ENCODE measurements at regions of chr4 and their contacts with region 1.

Region 1: GRCh38 chr4:110970642-110971041 is 347.8 kb upstream of the PITX2 start:
- DNase-seq: peak; percentile 72
- H3K4me3 Mint-ChIP-seq: no peak overlapping the region
- H3K27ac Mint-ChIP-seq: no peak overlapping the region
- H3K4me1 Mint-ChIP-seq: no peaks in the 10 kb centered on the region
- H3K27me3 Mint-ChIP-seq: no peaks in the 10 kb centered on the region
- CTCF ChIP-seq: peak; percentile 44

Region 2: DNA sequence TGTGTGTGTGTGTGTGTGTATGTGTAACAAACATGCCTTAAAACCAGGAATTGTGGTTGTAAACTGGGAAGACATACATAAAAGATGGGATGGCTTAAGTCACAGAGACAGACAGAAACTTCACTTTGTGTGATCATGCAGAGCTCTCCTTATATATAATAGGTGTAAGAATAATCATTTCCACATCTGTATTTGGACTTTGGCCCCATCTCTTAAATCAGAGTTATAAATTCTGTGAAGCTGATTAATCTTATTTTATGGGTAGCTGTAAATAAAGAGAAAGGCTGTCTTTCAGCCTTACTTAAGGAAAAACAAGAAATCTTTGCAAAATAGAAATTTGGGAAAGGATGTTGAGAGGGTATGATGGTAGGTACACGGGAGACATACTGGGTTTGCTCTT is 173.2 kb before region 1 on chr4:
- CTCF ChIA-PET with region 1: interaction called, 10 read pairs
- intact Hi-C with region 1: no loop called
- DNase-seq: no peak
- H3K4me3 Mint-ChIP-seq: no peak overlapping the region
- H3K27ac Mint-ChIP-seq: no peak overlapping the region
- H3K4me1 Mint-ChIP-seq: no peaks in the 10 kb centered on the region
- H3K27me3 Mint-ChIP-seq: no peaks in the 10 kb centered on the region
- CTCF ChIP-seq: no peak

Measured in Calu3 (cell line).